Heart left ventricle (tissue), 16 donors: ENCODE measurements at regions of chr14 and their contacts with region 1.

Region 1: DNA sequence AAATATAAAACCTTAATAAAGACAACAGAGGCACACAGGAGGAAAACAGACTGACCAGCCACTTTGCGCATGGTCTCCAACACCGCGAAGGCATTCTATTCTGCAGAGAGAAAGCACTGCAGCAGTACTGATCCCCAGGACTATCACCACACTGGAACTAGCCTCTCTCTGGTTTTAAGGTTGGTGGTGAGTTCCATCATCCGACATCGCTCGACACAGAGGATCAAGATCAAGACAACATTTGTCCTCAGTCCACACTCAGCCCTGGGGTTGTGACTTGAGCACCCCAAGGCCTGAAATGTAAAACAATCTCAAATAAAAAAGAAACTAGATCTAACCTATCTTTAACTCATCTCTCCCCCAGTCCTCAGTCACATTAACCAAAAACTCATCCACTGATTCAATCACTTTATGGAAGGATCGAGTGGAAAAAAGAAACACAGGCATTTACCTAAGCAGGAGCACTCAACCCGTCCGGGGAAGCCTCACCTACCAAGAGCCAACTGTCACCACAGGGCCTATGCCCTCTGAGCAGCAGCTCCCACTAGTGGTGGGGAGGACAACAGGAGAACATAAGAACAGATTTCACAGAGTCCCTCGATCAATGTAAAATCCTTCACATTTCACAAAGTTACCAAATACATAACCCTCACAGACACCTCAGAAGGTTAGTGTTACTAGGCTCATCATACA is 17.7 kb downstream of the STXBP6 start:
- DNase-seq: no peak
- ATAC-seq: peak in 1 of 4 donors; percentile 15
- H3K4me3 ChIP-seq: no peak overlapping the region
- H3K27ac ChIP-seq: no peak overlapping the region
- H3K4me1 ChIP-seq: peaks cover 0 to 36% (median 4%) of the 10 kb centered on the region in 12 donors
- H3K27me3 ChIP-seq: no peaks in the 10 kb centered on the region
- CTCF ChIP-seq: peak in 3 of 12 donors; percentile 16 to 24 (median 21)
- POLR2A ChIP-seq: no peak

Region 2: DNA sequence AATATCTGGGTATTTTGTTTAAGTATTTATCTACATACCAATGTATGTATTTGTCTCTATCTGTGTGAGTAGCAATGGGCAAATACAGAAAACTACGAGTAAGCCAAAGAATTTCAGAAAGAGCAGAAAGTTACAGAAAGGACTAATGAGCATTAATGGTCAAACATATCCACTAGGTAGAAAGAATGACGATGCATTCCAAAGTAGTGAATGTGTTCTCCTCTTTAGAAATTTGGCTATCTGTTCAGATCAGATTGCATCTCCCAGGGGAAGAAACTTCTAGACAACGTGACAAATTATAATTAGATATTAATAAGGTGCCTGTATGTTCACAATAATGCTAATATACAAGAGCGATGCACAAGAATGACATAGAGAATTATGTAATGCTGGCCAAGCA is 203.8 kb before region 1 on chr14:
- intact Hi-C with region 1: no loop called
- DNase-seq: no peak
- ATAC-seq: no peak
- H3K4me3 ChIP-seq: no peak overlapping the region
- H3K27ac ChIP-seq: no peak overlapping the region
- H3K4me1 ChIP-seq: peaks cover 0 to 25% (median 4%) of the 10 kb centered on the region in 12 donors
- H3K27me3 ChIP-seq: no peaks in the 10 kb centered on the region
- CTCF ChIP-seq: no peak
- POLR2A ChIP-seq: no peak

Region 3: DNA sequence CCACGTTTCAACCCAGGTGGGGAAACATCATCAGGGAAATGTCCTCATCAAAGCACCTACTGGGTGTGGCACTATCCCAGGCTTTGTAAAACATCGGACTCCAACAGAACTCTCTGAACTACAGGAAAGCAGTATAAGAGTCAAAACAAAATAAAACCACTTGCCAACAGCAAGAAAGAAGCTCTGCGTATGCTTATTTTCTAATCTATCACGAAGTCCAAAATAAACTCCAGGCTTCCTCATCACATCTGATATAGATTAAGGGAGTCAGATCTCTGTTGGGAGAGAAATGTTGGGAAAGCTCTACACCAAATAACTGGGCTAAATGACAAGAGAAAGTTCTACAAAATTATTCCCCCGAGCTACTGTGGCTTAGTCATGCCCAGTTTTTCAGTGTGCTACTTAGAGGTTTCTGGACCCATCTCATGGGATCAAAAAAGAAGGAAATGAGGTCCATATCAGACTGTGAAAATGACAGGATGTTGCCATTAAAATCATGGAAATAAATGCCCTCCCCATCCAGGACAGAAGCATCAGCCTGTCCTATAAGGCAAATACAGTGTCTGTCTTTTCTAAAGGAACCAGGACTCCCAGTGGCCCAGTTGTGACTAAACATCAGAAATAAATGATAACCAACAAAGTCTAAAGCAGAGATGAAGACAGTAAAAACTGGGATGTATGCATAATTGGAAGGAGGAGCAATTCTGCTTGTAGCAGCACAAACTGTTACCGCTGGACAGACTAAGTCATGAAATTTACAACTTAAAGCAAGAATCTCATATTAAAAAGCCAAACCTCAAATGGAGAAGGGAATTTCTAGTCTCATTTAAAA is 131.8 kb before region 1 on chr14:
- intact Hi-C with region 1: loop called in 1 of 10 experiments (anchors 10 kb)
- DNase-seq: no peak
- ATAC-seq: peak; percentile 26 to 89 (median 82)
- H3K4me3 ChIP-seq: peak overlapping the region in 6 of 12 donors; percentile 1 to 22 (median 6)
- H3K27ac ChIP-seq: peak overlapping the region; percentile 0 to 66 (median 42)
- H3K4me1 ChIP-seq: peaks cover 0 to 34% (median 13%) of the 10 kb centered on the region in 12 donors
- H3K27me3 ChIP-seq: no peaks in the 10 kb centered on the region
- CTCF ChIP-seq: peak in 1 of 12 donors; percentile 8
- POLR2A ChIP-seq: no peak

Region 4: DNA sequence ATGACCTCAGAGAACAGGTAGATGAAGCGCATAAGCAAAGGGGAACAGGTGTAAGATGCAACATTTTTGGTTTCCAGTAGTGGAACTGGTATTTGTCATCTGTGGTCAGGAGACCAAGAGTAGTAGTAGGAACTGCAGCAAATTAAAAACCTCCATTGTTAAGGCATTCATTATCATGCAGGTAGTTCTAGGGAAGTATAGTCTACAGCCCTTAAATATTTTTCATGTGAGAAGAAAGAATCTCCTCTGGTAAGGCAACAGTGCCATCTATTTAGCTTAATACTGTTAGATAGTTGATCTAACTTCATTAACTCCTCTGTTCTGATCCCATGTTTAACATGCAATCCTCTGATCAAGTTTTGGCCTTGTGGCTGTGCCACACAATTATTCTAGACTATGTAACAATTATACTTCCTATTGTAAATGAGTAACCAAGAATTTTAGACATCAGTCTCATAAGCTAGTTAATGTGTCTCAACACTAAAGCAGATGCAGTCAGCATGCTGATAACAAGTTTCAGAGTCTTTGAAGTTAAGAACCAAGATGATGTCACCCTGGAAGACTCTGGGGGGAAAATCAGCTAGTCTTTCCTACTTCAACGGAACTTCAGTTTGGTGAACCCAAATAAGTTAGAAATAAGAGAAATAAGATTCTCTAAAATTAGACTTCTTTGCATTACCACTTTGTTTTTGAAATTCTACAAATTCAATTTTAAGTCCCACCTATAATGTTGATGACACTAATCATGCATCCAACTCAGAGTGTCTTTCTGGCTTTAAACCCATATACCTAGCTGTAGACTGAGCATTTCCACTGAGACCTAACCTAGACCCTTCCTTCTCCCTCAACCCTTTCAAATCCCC is 53.1 kb before region 1 on chr14:
- intact Hi-C with region 1: no loop called
- DNase-seq: no peak
- ATAC-seq: no peak
- H3K4me3 ChIP-seq: no peak overlapping the region
- H3K27ac ChIP-seq: no peak overlapping the region
- H3K4me1 ChIP-seq: peaks cover 0 to 39% (median 8%) of the 10 kb centered on the region in 12 donors
- H3K27me3 ChIP-seq: no peaks in the 10 kb centered on the region
- CTCF ChIP-seq: no peak
- POLR2A ChIP-seq: no peak